Common myeloid progenitor, CD34-positive (primary cell): ENCODE measurements at regions of chr2 and their contacts with region 1.

Region 1: GRCh38 chr2:105775809-105776559 is 31.3 kb downstream of the NCK2 start:
- DNase-seq: peak; percentile 38 to 93 (median 88)
- H3K4me3 ChIP-seq: no peak overlapping the region
- H3K27ac ChIP-seq: peak overlapping the region; percentile 4 to 65
- H3K4me1 ChIP-seq: peaks cover 5 to 34% (median 27%) of the 10 kb centered on the region in 4 experiments
- H3K27me3 ChIP-seq: no peaks in the 10 kb centered on the region

Region 2: DNA sequence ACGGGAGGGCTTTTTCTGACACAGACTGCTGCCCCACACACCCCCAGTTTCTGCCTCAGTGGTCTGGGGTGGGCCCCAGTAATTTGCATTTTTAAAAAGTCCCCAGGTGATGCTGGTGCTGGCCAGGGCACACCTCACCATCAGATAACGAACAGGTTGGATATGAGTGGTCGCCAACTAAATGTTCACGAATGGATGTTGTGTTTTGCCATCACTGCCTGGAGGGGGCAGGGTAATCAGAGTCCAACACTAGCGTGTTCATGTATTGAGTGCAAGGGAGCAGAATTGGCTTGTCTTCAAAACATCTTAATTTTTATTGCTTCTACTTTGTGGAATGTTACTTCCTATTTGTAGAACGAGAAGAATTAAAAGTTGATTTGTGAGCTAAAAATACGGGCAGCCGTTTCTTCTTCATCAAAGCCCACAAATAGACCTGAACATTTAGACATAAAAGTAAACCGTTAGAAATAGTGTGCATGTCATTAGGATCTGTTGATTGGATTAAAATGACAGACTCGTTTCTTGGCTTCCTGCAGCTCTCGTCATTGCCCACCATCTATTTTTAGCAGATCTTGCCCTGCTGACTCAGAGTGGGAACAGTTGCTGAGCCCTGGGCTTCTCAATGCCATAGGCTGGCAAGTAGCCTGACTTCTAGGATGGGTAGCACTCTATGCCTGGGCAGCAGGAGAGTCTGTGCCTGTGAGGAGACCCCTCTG is 13.9 kb after region 1 on chr2:
- CTCF ChIA-PET with region 1: interaction called, 26 read pairs
- POLR2A ChIA-PET with region 1: interaction called, 3 read pairs
- DNase-seq: peak; percentile 78 to 97 (median 95)
- H3K4me3 ChIP-seq: peak overlapping the region in 5 of 7 experiments; percentile 27 to 57 (median 40)
- H3K27ac ChIP-seq: peak overlapping the region; percentile 73 to 85
- H3K4me1 ChIP-seq: peaks cover 33 to 87% (median 72%) of the 10 kb centered on the region in 4 experiments
- H3K27me3 ChIP-seq: no peaks in the 10 kb centered on the region